ENCODE measurements at regions of chr5 and their contacts with region 1.

Region 1: DNA sequence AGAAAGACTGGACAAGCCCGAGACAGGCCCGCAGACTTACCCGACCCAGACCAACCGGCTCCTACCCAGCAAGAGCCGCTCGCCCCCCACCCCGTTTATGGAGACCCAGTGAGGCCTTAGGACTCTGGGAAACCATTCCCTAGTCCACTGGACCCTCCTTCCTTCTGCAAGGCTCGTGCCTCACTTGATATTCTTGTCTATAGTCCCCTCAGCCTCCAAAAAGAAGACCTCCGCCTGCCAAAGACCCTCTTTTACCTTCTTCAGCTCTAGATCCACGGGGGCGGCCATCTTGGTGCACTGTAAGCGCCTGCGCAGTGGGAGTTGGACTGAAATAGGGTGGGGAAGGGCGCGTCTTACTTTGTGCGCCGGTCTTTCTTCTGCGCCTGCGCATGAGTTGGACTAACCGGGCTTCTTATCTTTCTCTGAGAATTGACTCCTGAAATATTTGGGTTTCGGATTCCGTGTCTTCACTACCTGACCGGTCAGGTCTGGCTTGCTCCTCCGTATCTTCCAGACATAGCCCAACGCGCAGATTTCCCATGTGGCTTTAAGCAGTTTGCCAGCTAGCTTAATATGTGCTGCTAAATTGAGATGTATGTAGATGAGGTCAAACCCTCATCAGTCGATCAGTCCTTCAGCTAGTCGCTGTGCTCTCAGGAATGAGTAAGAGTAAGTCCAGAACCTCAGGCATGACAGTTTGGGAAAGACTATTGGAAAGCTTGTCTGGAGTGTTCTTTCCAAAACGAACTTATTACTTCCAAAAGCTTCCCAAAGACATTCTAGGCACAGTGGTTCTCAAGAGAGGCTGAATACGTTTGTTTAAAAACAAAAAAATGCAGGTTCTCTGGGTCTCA is at the start of gene PFDN1:
- DNase-seq: peak; percentile 95
- H3K4me3 Mint-ChIP-seq: peak within 1 kb of the TSS; percentile 99
- H3K27ac Mint-ChIP-seq: peak within 1 kb of the TSS; percentile 91
- H3K4me1 Mint-ChIP-seq: peaks cover 20% of the 10 kb centered on the region
- H3K27me3 Mint-ChIP-seq: no peaks in the 10 kb centered on the region
- total RNA-seq, gene PFDN1: 50.6 to 57.1 TPM

Region 2: GRCh38 chr5:140174465-140175366 is 128.3 kb before region 1 on chr5 and contains the start of gene CYSTM1:
- CTCF ChIA-PET with region 1: no interaction called
- intact Hi-C with region 1: loop called (anchors 2 kb)
- DNase-seq: peak; percentile 97
- H3K4me3 Mint-ChIP-seq: peak within 1 kb of the TSS; percentile 92
- H3K27ac Mint-ChIP-seq: peak within 1 kb of the TSS; percentile 66
- H3K4me1 Mint-ChIP-seq: peaks cover 12% of the 10 kb centered on the region
- H3K27me3 Mint-ChIP-seq: peaks cover 2% of the 10 kb centered on the region
- total RNA-seq, gene CYSTM1: 22.3 to 25.1 TPM

Region 3: GRCh38 chr5:140251527-140251973 is 51.5 kb before region 1 on chr5:
- CTCF ChIA-PET with region 1: no interaction called
- intact Hi-C with region 1: loop called (anchors 1 kb)
- DNase-seq: peak; percentile 87
- H3K4me3 Mint-ChIP-seq: no peak overlapping the region
- H3K27ac Mint-ChIP-seq: peak overlapping the region; percentile 68
- H3K4me1 Mint-ChIP-seq: peaks cover 33% of the 10 kb centered on the region
- H3K27me3 Mint-ChIP-seq: no peaks in the 10 kb centered on the region

Region 4: DNA sequence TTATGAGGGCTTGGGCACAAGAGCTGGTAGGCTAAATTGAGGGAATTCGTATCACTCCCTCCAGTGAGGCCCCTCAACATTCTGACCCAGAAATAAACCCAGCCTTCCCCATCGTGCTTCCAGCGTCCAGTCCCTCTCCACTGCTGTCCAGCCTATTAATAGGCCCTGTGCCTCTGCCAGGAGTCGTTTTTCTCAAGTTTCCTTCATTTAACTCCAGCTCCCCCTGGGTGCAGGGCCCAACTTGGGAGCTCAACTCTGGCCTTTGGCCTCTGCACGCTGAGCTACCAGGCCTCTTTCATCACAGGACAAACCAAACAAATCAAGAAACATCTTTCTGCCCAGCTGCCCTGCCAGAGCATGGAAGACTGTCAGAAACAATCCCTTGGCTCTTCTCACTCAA is 33.4 kb after region 1 on chr5:
- CTCF ChIA-PET with region 1: no interaction called
- intact Hi-C with region 1: no loop called
- DNase-seq: no peak
- H3K4me3 Mint-ChIP-seq: no peak overlapping the region
- H3K27ac Mint-ChIP-seq: no peak overlapping the region
- H3K4me1 Mint-ChIP-seq: peaks cover 10% of the 10 kb centered on the region
- H3K27me3 Mint-ChIP-seq: no peaks in the 10 kb centered on the region

Region 5: GRCh38 chr5:140564196-140565023 is 261.4 kb after region 1 on chr5 and contains the starts of genes APBB3 and SLC35A4:
- CTCF ChIA-PET with region 1: no interaction called
- intact Hi-C with region 1: loop called (anchors 1 kb)
- DNase-seq: peak; percentile 97
- H3K4me3 Mint-ChIP-seq: peak within 1 kb of the TSS; percentile 96
- H3K27ac Mint-ChIP-seq: peak within 1 kb of the TSS; percentile 93
- H3K4me1 Mint-ChIP-seq: peaks cover 53% of the 10 kb centered on the region
- H3K27me3 Mint-ChIP-seq: no peaks in the 10 kb centered on the region
- total RNA-seq, gene APBB3: 15.4 to 16.5 TPM
- total RNA-seq, gene SLC35A4: 57.1 to 60.1 TPM

Region 6: GRCh38 chr5:140700177-140701144 is 397.4 kb after region 1 on chr5 and contains the start of gene ZMAT2:
- CTCF ChIA-PET with region 1: no interaction called
- intact Hi-C with region 1: loop called (anchors 2 kb)
- DNase-seq: peak; percentile 97
- H3K4me3 Mint-ChIP-seq: peak within 1 kb of the TSS; percentile 97
- H3K27ac Mint-ChIP-seq: peak within 1 kb of the TSS; percentile 87
- H3K4me1 Mint-ChIP-seq: peaks cover 24% of the 10 kb centered on the region
- H3K27me3 Mint-ChIP-seq: no peaks in the 10 kb centered on the region
- total RNA-seq, gene ZMAT2: 52.9 to 58.8 TPM

Measured in activated naive CD4-positive, alpha-beta T cell treated with anti-CD3 and anti-CD28 coated beads for 36 hours (primary cell).